Stomach (tissue), 19 donors: ENCODE measurements at regions of chr20 and their contacts with region 1.

Region 1: GRCh38 chr20:31822421-31823330 is 3.5 kb downstream of the MYLK2 start:
- DNase-seq: peak; percentile 76 to 91
- H3K4me3 ChIP-seq: peak overlapping the region in 2 of 4 donors; percentile 7 to 23
- H3K27ac ChIP-seq: no peak overlapping the region
- H3K4me1 ChIP-seq: peaks cover 0 to 11% (median 10%) of the 10 kb centered on the region in 4 donors
- H3K27me3 ChIP-seq: peaks cover 0 to 4% (median 3%) of the 10 kb centered on the region in 3 donors
- CTCF ChIP-seq: peak in 6 of 7 experiments; percentile 32 to 100 (median 96)
- EP300 ChIP-seq: no peak
- POLR2A ChIP-seq: no peak

Region 2: DNA sequence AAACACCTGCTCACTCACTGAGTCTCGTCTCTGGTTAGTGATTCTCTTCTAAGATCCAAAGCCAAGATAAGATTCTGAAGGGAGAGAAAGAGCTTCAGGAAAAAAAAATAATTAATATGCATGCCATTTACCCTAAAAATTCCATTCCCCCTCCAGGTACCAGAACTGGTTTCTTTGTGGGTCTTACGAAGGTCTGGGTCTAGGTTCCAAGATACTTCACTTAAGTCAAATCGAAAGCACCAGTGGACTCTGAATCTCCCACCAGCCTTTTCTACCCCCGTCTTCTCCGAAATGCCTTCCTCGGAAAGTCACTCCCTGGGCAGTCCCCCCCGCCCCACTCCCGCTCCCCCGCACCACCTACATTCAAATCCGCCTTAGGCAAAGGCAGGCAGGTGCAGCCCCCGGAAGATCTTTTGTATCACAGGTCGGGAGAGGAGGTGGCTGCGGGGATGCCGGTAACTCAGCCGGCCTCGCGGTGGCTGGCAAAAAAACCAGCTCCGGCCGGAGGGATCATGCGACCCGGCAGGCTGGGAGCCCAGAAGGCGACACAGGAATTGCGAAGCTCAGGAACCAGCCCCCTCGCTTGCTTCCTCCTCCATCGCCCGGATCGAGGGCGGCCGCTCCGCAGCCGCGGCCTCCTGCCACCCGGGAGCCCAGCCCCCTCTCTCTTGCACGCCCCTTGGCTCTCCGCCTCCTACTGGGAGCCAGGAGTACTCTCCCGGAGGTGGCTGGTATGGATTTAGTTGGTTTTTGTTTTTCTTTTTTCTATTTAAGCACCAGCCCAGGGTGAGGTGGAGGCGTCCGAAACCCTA is 100.2 kb before region 1 on chr20 and contains the start of gene BCL2L1:
- intact Hi-C with region 1: no loop called
- DNase-seq: peak; percentile 91 to 94
- H3K4me3 ChIP-seq: peak within 1 kb of the TSS; percentile 70 to 78 (median 72)
- H3K27ac ChIP-seq: peak within 1 kb of the TSS; percentile 97 to 100 (median 98)
- H3K4me1 ChIP-seq: peaks cover 34 to 52% (median 46%) of the 10 kb centered on the region in 4 donors
- H3K27me3 ChIP-seq: no peaks in the 10 kb centered on the region
- CTCF ChIP-seq: peak in 5 of 7 experiments; percentile 65 to 96 (median 74)
- EP300 ChIP-seq: no peak
- POLR2A ChIP-seq: peak in 2 of 4 donors; percentile 53 to 76
- total RNA-seq, gene BCL2L1: 61.7 to 210 (median 68.7) TPM

Region 3: GRCh38 chr20:32028647-32029372 is 206.1 kb after region 1 on chr20:
- intact Hi-C with region 1: loop called (anchors 10 kb)
- DNase-seq: peak in 1 of 2 donors; percentile 48
- H3K4me3 ChIP-seq: no peak overlapping the region
- H3K27ac ChIP-seq: no peak overlapping the region
- H3K4me1 ChIP-seq: peaks cover 4 to 15% (median 12%) of the 10 kb centered on the region in 4 donors
- H3K27me3 ChIP-seq: peaks cover 0 to 49% (median 12%) of the 10 kb centered on the region in 3 donors
- CTCF ChIP-seq: no peak
- EP300 ChIP-seq: no peak
- POLR2A ChIP-seq: no peak

Region 4: GRCh38 chr20:32079655-32080109 is 257.0 kb after region 1 on chr20:
- intact Hi-C with region 1: loop called (anchors 10 kb)
- DNase-seq: peak in 1 of 2 donors; percentile 22
- H3K4me3 ChIP-seq: no peak overlapping the region
- H3K27ac ChIP-seq: no peak overlapping the region
- H3K4me1 ChIP-seq: no peaks in the 10 kb centered on the region
- H3K27me3 ChIP-seq: peaks cover 0 to 47% (median 0%) of the 10 kb centered on the region in 3 donors
- CTCF ChIP-seq: no peak
- EP300 ChIP-seq: no peak
- POLR2A ChIP-seq: no peak